Activated CD8-positive, alpha-beta T cell treated with anti-CD3 and anti-CD28 coated beads for 36 hours (primary cell): ENCODE measurements at regions of chr16 and their contacts with region 1.

Region 1: GRCh38 chr16:970766-971581 is at the start of gene LMF1:
- DNase-seq: peak; percentile 93
- ATAC-seq: peak; percentile 99
- H3K4me3 Mint-ChIP-seq: peak within 1 kb of the TSS; percentile 78
- H3K27ac Mint-ChIP-seq: peak within 1 kb of the TSS; percentile 74
- H3K4me1 Mint-ChIP-seq: peaks cover 11% of the 10 kb centered on the region
- H3K27me3 Mint-ChIP-seq: no peaks in the 10 kb centered on the region
- CTCF ChIP-seq: no peak
- total RNA-seq, gene LMF1: 8.7 to 9.7 TPM

Region 2: GRCh38 chr16:920717-921116 is 50.3 kb before region 1 on chr16:
- CTCF ChIA-PET with region 1: no interaction called
- POLR2A ChIA-PET with region 1: no interaction called
- intact Hi-C with region 1: no loop called
- DNase-seq: no peak
- ATAC-seq: no peak
- H3K4me3 Mint-ChIP-seq: no peak overlapping the region
- H3K27ac Mint-ChIP-seq: no peak overlapping the region
- H3K4me1 Mint-ChIP-seq: no peaks in the 10 kb centered on the region
- H3K27me3 Mint-ChIP-seq: no peaks in the 10 kb centered on the region
- CTCF ChIP-seq: no peak

Region 3: GRCh38 chr16:951660-952301 is 19.2 kb before region 1 on chr16:
- CTCF ChIA-PET with region 1: no interaction called
- POLR2A ChIA-PET with region 1: no interaction called
- intact Hi-C with region 1: no loop called
- DNase-seq: no peak
- ATAC-seq: no peak
- H3K4me3 Mint-ChIP-seq: no peak overlapping the region
- H3K27ac Mint-ChIP-seq: no peak overlapping the region
- H3K4me1 Mint-ChIP-seq: no peaks in the 10 kb centered on the region
- H3K27me3 Mint-ChIP-seq: no peaks in the 10 kb centered on the region
- CTCF ChIP-seq: no peak

Region 4: GRCh38 chr16:982145-983043 is 11.4 kb after region 1 on chr16:
- CTCF ChIA-PET with region 1: interaction called, 6 read pairs
- POLR2A ChIA-PET with region 1: interaction called, 30 read pairs
- intact Hi-C with region 1: no loop called
- DNase-seq: peak; percentile 26
- ATAC-seq: no peak
- H3K4me3 Mint-ChIP-seq: peak overlapping the region; percentile 41
- H3K27ac Mint-ChIP-seq: no peak overlapping the region
- H3K4me1 Mint-ChIP-seq: peaks cover 9% of the 10 kb centered on the region
- H3K27me3 Mint-ChIP-seq: peaks cover 5% of the 10 kb centered on the region
- CTCF ChIP-seq: no peak

Region 5: GRCh38 chr16:995087-995486 is 24.1 kb after region 1 on chr16:
- CTCF ChIA-PET with region 1: no interaction called
- POLR2A ChIA-PET with region 1: no interaction called
- intact Hi-C with region 1: no loop called
- DNase-seq: peak; percentile 27
- ATAC-seq: no peak
- H3K4me3 Mint-ChIP-seq: no peak overlapping the region
- H3K27ac Mint-ChIP-seq: no peak overlapping the region
- H3K4me1 Mint-ChIP-seq: peaks cover 36% of the 10 kb centered on the region
- H3K27me3 Mint-ChIP-seq: peaks cover 3% of the 10 kb centered on the region
- CTCF ChIP-seq: no peak